PC-3 (cell line): ENCODE measurements at regions of chr12 and their contacts with region 1.

Region 1: DNA sequence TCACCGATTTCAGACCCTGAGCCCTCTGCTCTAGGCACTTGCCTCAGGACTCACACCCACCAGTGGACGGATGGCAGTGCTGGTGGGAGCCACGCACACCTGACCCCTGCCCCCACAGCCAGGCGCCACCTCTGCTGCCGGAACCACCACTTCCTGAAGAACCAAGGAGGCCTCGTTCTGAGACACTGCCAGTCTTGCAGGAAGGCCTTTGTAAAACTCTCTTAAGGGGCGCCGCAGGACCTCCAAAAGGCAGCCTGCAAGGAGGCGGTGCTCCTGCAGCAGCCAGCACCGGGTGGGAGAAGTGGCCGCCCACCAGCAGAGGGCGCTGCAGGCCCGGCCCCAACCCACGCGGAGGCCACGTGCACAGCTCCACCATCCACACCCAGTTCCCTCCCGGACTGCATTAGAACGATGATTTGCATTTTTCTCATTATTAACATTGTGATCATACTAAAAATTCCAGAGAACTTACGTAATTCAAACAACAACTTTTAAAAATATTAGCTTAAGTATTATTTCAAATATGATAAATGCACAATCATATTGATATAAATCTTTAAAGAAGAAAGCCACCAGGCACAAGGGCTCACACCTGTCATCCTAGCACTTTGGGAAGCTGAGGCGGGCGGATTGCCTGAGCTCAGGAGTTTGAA is 12.8 kb downstream of the STX2 start:
- DNase-seq: peak; percentile 60
- ATAC-seq: peak; percentile 88
- H3K4me3 ChIP-seq: no peak overlapping the region
- H3K27ac ChIP-seq: no peak overlapping the region
- H3K4me1 ChIP-seq: peaks cover 11% of the 10 kb centered on the region; the same call in 1 of the 2 replicates
- H3K27me3 ChIP-seq: no peaks in the 10 kb centered on the region
- CTCF ChIP-seq: peak; percentile 97

Region 2: DNA sequence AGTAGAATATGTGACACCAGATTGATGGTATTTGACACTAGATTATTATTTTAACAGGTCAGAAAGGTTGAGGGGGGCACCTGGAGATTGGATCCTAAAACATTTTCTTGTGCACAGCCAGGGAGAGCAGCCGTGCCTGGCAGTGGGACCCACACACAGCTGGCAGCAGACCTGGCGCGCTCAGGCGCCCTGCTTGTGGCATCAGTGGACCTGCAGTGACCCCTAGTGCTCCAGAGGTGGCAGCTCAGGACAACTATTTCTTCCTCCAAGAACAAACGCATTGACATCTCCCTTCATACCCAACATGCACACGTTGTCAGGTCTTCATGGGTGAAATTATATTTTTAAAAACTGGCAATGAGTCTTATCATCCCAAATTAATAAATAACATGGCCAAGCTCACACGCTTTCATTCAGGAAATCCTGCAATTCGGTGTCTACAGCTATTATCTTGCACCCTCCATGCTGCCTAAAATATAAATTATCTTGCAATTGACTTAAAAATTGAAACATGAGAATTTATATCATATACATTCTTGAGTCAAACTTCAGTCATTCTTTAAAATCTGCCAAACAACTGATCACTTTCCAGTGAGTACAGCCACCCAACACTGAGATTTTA is 914.7 kb before region 1 on chr12:
- CTCF ChIA-PET with region 1: no interaction called
- POLR2A ChIA-PET with region 1: no interaction called
- intact Hi-C with region 1: loop called (anchors 10 kb)
- DNase-seq: peak; percentile 40
- ATAC-seq: peak; percentile 43; the same call in 1 of the 2 replicates
- H3K4me3 ChIP-seq: no peak overlapping the region
- H3K27ac ChIP-seq: no peak overlapping the region
- H3K4me1 ChIP-seq: no peaks in the 10 kb centered on the region
- H3K27me3 ChIP-seq: no peaks in the 10 kb centered on the region
- CTCF ChIP-seq: peak; percentile 70

Region 3: DNA sequence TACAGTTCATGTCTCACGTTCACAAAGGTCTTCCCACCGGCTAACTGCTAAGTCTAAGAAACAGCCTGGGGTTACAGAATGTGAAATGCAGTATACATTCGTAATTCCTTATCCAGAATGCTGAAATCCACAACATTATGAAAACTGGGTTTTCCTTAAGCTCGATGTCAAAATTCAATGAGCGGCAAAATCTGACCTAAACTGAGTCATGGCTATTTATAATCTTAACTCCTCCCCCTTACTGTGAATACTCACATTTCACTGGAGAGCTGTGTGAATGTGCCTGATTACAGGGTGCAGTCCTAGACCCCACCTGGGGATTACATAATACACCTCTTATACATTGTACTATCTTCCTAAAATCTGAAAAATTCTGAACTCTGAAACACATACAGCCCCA is 22.6 kb before region 1 on chr12:
- CTCF ChIA-PET with region 1: no interaction called
- POLR2A ChIA-PET with region 1: no interaction called
- intact Hi-C with region 1: no loop called
- DNase-seq: peak; percentile 18
- ATAC-seq: no peak
- H3K4me3 ChIP-seq: no peak overlapping the region
- H3K27ac ChIP-seq: no peak overlapping the region
- H3K4me1 ChIP-seq: peaks cover 27% of the 10 kb centered on the region
- H3K27me3 ChIP-seq: no peaks in the 10 kb centered on the region
- CTCF ChIP-seq: no peak